Right ventricle myocardium inferior (tissue), 1 donor: ENCODE measurements at regions of chr18 and their contacts with region 1.

Region 1: DNA sequence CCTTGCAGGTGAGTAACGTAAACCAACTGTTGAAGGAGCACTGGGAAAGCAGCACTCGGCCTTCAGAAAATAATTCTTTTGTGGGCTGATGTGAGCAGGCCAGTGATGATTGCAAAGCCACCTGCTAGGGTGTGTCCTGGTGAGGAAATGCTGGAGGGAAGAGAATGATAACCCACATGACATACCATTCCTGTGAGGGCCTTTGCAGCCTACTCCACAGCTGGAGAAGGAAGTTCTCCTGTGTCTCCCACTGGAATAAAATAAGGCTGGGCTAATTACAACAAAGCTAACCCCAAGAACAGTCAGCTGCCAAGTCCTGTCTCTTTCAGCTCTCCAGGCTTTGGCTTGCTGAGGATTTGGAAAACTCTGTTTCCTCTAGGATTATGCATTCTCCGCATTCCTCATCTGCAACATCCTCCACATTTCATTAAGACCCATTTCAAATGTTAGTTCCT is 16.7 kb upstream of the DSG1 start:
- DNase-seq: no peak
- ATAC-seq: peak; percentile 28

Region 2: GRCh38 chr18:31399306-31400032 is 98.2 kb after region 1 on chr18:
- intact Hi-C with region 1: loop called (anchors 10 kb)
- DNase-seq: no peak
- ATAC-seq: no peak